ENCODE measurements at regions of chr16 and their contacts with region 1.

Region 1: GRCh38 chr16:20900299-20901067 is at the starts of genes DCUN1D3 and LYRM1:
- DNase-seq: peak; percentile 62 to 95 (median 78)
- ATAC-seq: peak; percentile 71
- H3K4me3 ChIP-seq: peak within 1 kb of the TSS; percentile 84
- H3K4me3 Mint-ChIP-seq: peak within 1 kb of the TSS; percentile 96
- H3K27ac ChIP-seq: peak within 1 kb of the TSS; percentile 85 to 95
- H3K27ac Mint-ChIP-seq: peak within 1 kb of the TSS; percentile 95
- H3K4me1 ChIP-seq: peaks cover 46% of the 10 kb centered on the region
- H3K4me1 Mint-ChIP-seq: peaks cover 82% of the 10 kb centered on the region
- H3K27me3 ChIP-seq: no peaks in the 10 kb centered on the region
- H3K27me3 Mint-ChIP-seq: no peaks in the 10 kb centered on the region
- CTCF ChIP-seq: no peak
- total RNA-seq, gene DCUN1D3: 1.9 TPM
- total RNA-seq, gene LYRM1: 13.3 to 14.0 TPM

Region 2: GRCh38 chr16:19521471-19522396 is 1378.7 kb before region 1 on chr16 and contains the start of gene GDE1:
- CTCF ChIA-PET with region 1: no interaction called
- POLR2A ChIA-PET with region 1: no interaction called
- intact Hi-C with region 1: loop called in 1 of 2 experiments (anchors 10 kb)
- DNase-seq: peak; percentile 85 to 97 (median 93)
- ATAC-seq: peak; percentile 76
- H3K4me3 ChIP-seq: peak within 1 kb of the TSS; percentile 93
- H3K4me3 Mint-ChIP-seq: peak within 1 kb of the TSS; percentile 99
- H3K27ac ChIP-seq: peak within 1 kb of the TSS; percentile 58 to 78
- H3K27ac Mint-ChIP-seq: peak within 1 kb of the TSS; percentile 84
- H3K4me1 ChIP-seq: peaks cover 55% of the 10 kb centered on the region
- H3K4me1 Mint-ChIP-seq: peaks cover 69% of the 10 kb centered on the region
- H3K27me3 ChIP-seq: no peaks in the 10 kb centered on the region
- H3K27me3 Mint-ChIP-seq: no peaks in the 10 kb centered on the region
- CTCF ChIP-seq: peak; percentile 27
- total RNA-seq, gene GDE1: 22.0 to 22.2 TPM

Region 3: DNA sequence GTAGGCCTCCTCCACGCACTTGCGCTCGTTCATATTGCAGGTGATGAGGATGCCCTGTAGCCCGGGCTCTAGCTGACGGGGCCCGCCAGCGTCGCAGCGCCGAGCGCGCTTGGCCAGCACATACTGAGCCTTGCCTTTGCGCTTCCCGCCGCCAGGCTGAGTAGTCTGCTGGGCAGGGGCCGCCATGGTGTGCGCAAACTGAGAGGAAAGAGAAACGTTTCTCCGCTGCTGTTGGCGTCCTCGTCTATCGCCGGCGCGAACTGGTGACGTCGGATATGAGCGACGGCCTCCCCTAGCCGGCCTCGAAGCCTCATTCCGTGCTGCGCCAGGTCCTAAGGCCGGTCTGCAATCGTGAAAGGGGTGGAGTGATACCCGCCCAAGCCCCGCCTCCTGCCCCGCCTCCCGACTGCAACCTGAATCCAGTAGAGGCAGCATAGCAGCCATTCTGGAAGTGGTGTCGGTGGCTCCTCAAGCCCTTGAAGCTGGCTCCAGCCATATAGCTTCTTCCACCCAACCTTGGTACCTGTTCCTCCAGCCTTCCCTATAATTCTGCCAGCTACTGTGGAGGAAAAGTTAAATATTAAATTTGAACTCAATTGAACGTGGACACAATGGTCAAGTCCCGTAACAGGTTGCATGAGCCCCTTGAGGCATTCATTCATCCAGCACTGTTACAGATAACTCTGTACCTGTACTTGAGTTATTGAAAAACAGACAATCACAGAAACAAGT is 158.8 kb before region 1 on chr16 and contains the start of gene THUMPD1:
- CTCF ChIA-PET with region 1: no interaction called
- POLR2A ChIA-PET with region 1: no interaction called
- intact Hi-C with region 1: loop called in 1 of 2 experiments (anchors 2 kb)
- DNase-seq: peak; percentile 94 to 99 (median 98)
- ATAC-seq: peak; percentile 92
- H3K4me3 ChIP-seq: peak within 1 kb of the TSS; percentile 100
- H3K4me3 Mint-ChIP-seq: peak within 1 kb of the TSS; percentile 97
- H3K27ac ChIP-seq: peak within 1 kb of the TSS; percentile 99 to 100
- H3K27ac Mint-ChIP-seq: peak within 1 kb of the TSS; percentile 99
- H3K4me1 ChIP-seq: peaks cover 35% of the 10 kb centered on the region
- H3K4me1 Mint-ChIP-seq: peaks cover 34% of the 10 kb centered on the region
- H3K27me3 ChIP-seq: no peaks in the 10 kb centered on the region
- H3K27me3 Mint-ChIP-seq: no peaks in the 10 kb centered on the region
- CTCF ChIP-seq: no peak
- total RNA-seq, gene THUMPD1: 105 to 107 TPM

Region 4: GRCh38 chr16:20806168-20807050 is 94.1 kb before region 1 on chr16 and contains the starts of genes ERI2 and REXO5:
- CTCF ChIA-PET with region 1: no interaction called
- POLR2A ChIA-PET with region 1: interaction called, 3 read pairs
- intact Hi-C with region 1: loop called in 1 of 2 experiments (anchors 5 kb)
- DNase-seq: peak; percentile 49 to 87 (median 62)
- ATAC-seq: peak; percentile 88
- H3K4me3 ChIP-seq: peak within 1 kb of the TSS; percentile 92
- H3K4me3 Mint-ChIP-seq: peak within 1 kb of the TSS; percentile 98
- H3K27ac ChIP-seq: peak within 1 kb of the TSS; percentile 49 to 72
- H3K27ac Mint-ChIP-seq: peak within 1 kb of the TSS; percentile 81
- H3K4me1 ChIP-seq: peaks cover 23% of the 10 kb centered on the region
- H3K4me1 Mint-ChIP-seq: peaks cover 17% of the 10 kb centered on the region
- H3K27me3 ChIP-seq: no peaks in the 10 kb centered on the region
- H3K27me3 Mint-ChIP-seq: no peaks in the 10 kb centered on the region
- CTCF ChIP-seq: peak; percentile 33
- total RNA-seq, gene ERI2: 0.25 to 0.45 TPM
- total RNA-seq, gene REXO5: 0.56 TPM in 1 of 2 experiments, not detected in the other

Region 5: DNA sequence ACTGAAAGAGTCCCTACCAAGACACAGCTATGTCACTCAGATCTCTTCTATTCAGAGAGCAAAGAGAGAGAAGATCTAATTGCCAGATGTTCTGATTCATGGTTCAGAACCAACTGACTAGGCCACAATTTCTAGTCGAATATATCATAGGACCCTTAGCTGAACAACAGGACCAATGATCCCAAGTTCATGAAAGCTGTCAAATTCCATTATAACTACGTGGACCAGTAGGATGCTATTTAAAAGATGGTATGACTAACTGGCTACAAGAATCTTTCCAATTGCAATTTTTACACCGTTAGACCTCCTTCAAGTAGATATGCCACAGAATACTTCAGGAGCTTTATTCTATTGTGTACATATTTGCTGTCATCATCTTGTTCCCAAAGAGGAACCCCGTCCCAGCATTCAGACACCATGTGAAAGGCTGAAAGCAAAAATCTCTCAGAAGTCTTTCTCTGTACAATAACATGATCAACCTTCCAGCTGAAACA is 26.3 kb before region 1 on chr16:
- CTCF ChIA-PET with region 1: interaction called, 11 read pairs
- POLR2A ChIA-PET with region 1: interaction called, 34 read pairs
- intact Hi-C with region 1: loop called (anchors 2 kb)
- DNase-seq: no peak
- ATAC-seq: no peak
- H3K4me3 ChIP-seq: peak overlapping the region; percentile 27
- H3K4me3 Mint-ChIP-seq: peak overlapping the region; percentile 70
- H3K27ac ChIP-seq: peak overlapping the region; percentile 27 to 67
- H3K27ac Mint-ChIP-seq: peak overlapping the region; percentile 91
- H3K4me1 ChIP-seq: peaks cover 19% of the 10 kb centered on the region
- H3K4me1 Mint-ChIP-seq: peaks cover 45% of the 10 kb centered on the region
- H3K27me3 ChIP-seq: no peaks in the 10 kb centered on the region
- H3K27me3 Mint-ChIP-seq: no peaks in the 10 kb centered on the region
- CTCF ChIP-seq: no peak

Region 6: DNA sequence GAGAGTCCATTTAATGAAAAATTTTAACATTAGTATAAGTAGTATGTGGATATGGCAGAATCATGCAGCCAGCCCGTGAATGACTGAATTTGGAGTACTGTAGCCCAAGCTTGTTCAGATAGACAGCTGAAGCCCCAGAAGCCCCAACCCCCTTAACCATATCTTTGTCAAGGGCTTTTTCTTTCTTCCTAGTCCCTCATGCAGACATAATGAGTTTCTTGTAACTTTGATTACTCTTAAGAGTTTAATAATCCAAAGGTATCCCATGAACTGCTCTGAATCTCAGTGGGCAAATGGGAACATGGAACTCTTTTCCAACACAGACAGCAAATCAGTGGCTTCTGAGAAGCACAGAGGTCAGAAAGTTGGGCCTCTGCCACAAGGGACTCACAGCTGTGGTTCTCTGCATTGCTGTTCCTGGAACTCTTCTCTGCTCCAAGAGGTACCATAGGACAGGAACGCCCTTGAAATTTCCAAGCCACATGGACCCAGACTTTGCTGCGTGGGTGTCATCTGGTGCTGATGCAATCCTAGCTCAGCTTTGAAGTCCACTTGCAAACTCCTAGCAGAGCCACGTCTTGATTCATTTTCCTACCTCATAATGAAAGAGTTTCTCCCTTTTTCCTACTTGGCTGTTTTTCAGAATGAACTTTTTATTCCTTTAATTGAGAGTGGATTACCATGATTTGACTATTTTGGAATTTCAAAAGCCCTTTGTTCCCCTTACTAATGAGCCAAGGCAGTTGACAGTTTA is 18.2 kb after region 1 on chr16:
- CTCF ChIA-PET with region 1: no interaction called
- POLR2A ChIA-PET with region 1: no interaction called
- intact Hi-C with region 1: no loop called
- DNase-seq: no peak
- ATAC-seq: no peak
- H3K4me3 ChIP-seq: no peak overlapping the region
- H3K4me3 Mint-ChIP-seq: no peak overlapping the region
- H3K27ac ChIP-seq: no peak overlapping the region
- H3K27ac Mint-ChIP-seq: no peak overlapping the region
- H3K4me1 ChIP-seq: no peaks in the 10 kb centered on the region
- H3K4me1 Mint-ChIP-seq: no peaks in the 10 kb centered on the region
- H3K27me3 ChIP-seq: no peaks in the 10 kb centered on the region
- H3K27me3 Mint-ChIP-seq: no peaks in the 10 kb centered on the region
- CTCF ChIP-seq: no peak

Region 7: GRCh38 chr16:21158208-21159110 is 258.0 kb after region 1 on chr16 and contains the start of gene LDAF1:
- CTCF ChIA-PET with region 1: no interaction called
- POLR2A ChIA-PET with region 1: interaction called, 3 read pairs
- intact Hi-C with region 1: loop called (anchors 5 kb)
- DNase-seq: peak; percentile 56 to 86 (median 76)
- ATAC-seq: peak; percentile 96
- H3K4me3 ChIP-seq: peak within 1 kb of the TSS; percentile 77
- H3K4me3 Mint-ChIP-seq: peak within 1 kb of the TSS; percentile 92
- H3K27ac ChIP-seq: peak within 1 kb of the TSS in 1 of 2 donors; percentile 14
- H3K27ac Mint-ChIP-seq: peak within 1 kb of the TSS; percentile 41
- H3K4me1 ChIP-seq: peaks cover 22% of the 10 kb centered on the region
- H3K4me1 Mint-ChIP-seq: peaks cover 26% of the 10 kb centered on the region
- H3K27me3 ChIP-seq: no peaks in the 10 kb centered on the region
- H3K27me3 Mint-ChIP-seq: no peaks in the 10 kb centered on the region
- CTCF ChIP-seq: no peak
- total RNA-seq, gene LDAF1: 11.0 to 11.2 TPM

Measured in CD4-positive, alpha-beta T cell (primary cell).